PC-9 (cell line): ENCODE measurements at regions of chr5 and their contacts with region 1.

Region 1: DNA sequence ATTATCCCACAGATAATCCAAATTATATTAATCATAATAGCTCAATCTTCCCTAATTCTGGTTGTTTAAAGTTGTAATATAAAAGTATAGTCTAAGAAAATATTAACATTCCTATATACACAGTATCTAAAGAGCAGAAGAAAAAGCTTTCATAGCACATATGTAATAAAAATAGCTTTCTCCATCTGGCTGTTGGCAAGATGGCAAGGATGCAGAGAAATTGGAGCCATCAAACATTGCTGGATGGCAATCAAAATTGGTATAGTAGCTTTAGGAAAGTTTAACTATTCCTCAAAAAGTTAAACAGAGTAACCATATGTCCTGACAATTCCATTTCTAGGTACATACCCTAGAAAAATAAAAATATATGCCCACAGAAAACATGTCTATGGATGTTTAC is 66.8 kb downstream of the TBCA start:
- DNase-seq: no peak
- H3K4me3 ChIP-seq: no peak overlapping the region
- H3K27ac ChIP-seq: no peak overlapping the region
- H3K4me1 ChIP-seq: no peaks in the 10 kb centered on the region
- H3K27me3 ChIP-seq: no peaks in the 10 kb centered on the region
- CTCF ChIP-seq: no peak

Region 2: GRCh38 chr5:77696120-77696519 is 13.2 kb before region 1 on chr5:
- CTCF ChIA-PET with region 1: no interaction called
- POLR2A ChIA-PET with region 1: interaction called, 25 read pairs
- intact Hi-C with region 1: no loop called
- DNase-seq: no peak
- H3K4me3 ChIP-seq: no peak overlapping the region
- H3K27ac ChIP-seq: no peak overlapping the region
- H3K4me1 ChIP-seq: no peaks in the 10 kb centered on the region
- H3K27me3 ChIP-seq: no peaks in the 10 kb centered on the region
- CTCF ChIP-seq: no peak